ENCODE measurements at regions of chr14 and their contacts with region 1.

Region 1: GRCh38 chr14:67695394-67695949 is at the start of gene RDH11:
- DNase-seq: peak; percentile 91
- H3K4me3 Mint-ChIP-seq: peak within 1 kb of the TSS; percentile 81
- H3K27ac Mint-ChIP-seq: peak within 1 kb of the TSS; percentile 91
- H3K4me1 Mint-ChIP-seq: peaks cover 22% of the 10 kb centered on the region
- H3K27me3 Mint-ChIP-seq: no peaks in the 10 kb centered on the region
- total RNA-seq, gene RDH11: 58.5 to 64.3 TPM

Region 2: DNA sequence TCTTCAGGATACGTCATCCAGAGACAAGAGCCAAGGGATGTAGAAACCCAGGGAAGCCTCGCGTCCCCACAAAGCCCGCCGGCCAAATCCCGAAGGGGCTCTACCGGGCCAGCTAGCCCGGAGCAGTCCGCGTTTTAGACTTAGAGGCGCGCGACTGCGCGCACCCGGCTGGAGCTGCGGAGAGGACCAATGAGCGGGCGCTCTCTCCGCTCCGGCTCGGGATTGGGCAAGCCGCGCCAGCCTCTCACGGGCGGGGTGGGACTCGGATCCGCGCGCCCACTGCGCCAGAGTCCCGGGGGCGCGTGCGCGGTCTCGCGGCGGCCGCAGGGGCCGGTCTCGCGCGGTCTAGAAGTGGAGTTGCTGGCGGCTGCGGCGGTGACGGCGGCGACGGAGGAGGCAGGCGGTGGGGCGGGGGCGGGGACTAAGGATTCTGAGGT is 454.5 kb before region 1 on chr14:
- CTCF ChIA-PET with region 1: no interaction called
- intact Hi-C with region 1: loop called (anchors 5 kb)
- DNase-seq: peak; percentile 94
- H3K4me3 Mint-ChIP-seq: peak overlapping the region; percentile 85
- H3K27ac Mint-ChIP-seq: peak overlapping the region; percentile 86
- H3K4me1 Mint-ChIP-seq: peaks cover 19% of the 10 kb centered on the region
- H3K27me3 Mint-ChIP-seq: peaks cover 2% of the 10 kb centered on the region

Region 3: DNA sequence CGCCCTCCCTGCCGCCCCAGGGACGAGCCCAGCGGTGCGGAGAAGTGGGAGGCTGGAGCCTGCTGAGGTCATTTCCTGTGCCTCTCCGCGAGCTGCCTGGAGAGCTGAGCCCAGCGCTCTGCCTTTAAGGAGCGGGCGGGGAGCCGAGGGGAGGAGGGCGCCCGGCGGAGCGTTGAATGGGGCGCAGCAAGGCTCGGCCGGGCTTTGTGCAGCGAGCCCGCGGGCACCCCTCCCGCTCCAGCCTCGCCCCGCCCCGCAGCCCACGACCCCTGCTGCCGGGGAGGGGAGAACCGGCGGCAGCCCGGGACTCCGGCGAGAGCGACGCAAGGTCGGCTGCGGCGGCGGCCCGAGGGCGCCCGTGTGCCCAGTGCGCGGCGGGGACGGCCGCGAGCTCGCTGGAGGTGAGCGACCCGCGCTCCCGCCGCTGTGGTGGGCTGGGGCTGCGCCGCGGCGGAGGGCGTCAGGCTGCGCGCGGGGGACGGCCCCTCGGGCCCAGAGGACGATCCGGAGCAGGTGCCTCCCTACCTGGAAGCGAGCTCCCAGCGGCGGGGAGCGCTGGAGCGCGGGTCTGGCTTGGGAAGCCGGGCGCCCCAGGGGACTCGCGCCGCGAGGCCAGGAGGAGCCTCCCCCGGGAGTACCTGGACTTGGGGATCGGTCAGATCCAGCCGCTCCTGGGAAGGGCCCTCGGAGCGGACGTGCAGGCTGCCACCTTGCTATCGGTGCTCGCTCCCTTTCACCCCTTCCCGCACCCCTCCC is 162.3 kb before region 1 on chr14 and contains the start of gene PLEKHH1:
- CTCF ChIA-PET with region 1: no interaction called
- intact Hi-C with region 1: no loop called
- DNase-seq: peak; percentile 76
- H3K4me3 Mint-ChIP-seq: peak within 1 kb of the TSS; percentile 65
- H3K27ac Mint-ChIP-seq: no peak within 1 kb of the TSS
- H3K4me1 Mint-ChIP-seq: peaks cover 3% of the 10 kb centered on the region
- H3K27me3 Mint-ChIP-seq: peaks cover 16% of the 10 kb centered on the region
- total RNA-seq, gene PLEKHH1: 2.2 to 2.5 TPM

Region 4: DNA sequence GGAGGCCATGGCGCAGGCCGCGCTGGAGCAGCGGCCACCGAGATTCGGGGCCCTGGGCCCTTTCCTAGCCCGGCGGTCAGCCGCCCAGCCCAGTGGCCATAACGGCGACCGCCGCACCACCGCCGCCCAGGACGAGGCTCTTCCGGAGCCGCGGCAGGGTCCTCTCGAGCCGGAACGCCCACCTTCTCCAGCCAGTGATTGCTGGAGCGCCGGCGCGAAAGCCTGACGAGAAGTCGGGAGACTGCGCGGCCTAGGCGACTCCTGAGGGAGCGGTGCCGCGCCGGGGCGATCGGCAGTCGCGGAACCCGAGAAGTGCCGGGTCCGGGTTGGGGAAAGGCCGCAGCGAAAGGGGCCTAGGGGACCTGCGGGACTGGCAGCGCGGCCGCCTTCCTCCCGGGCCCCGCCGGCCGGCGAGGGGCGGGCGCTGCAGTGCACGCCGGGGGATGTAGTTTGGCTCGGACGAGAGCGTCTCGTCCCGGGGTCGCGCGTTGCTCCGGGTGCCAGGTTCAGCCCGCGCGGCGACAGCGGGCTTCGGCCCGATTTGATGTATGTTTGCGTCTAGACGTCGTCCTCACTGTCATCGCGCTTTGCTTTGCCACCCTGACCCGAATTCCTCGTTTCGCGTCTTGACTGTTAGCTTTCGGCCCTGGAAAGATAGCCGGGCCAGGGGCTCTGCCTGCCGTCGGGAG is 20.8 kb before region 1 on chr14 and contains the start of gene VTI1B:
- CTCF ChIA-PET with region 1: interaction called, 3 read pairs
- intact Hi-C with region 1: loop called (anchors 1 kb)
- DNase-seq: peak; percentile 68
- H3K4me3 Mint-ChIP-seq: peak within 1 kb of the TSS; percentile 80
- H3K27ac Mint-ChIP-seq: peak within 1 kb of the TSS; percentile 66
- H3K4me1 Mint-ChIP-seq: peaks cover 34% of the 10 kb centered on the region
- H3K27me3 Mint-ChIP-seq: no peaks in the 10 kb centered on the region
- total RNA-seq, gene VTI1B: 74.2 to 78.3 TPM

Region 5: DNA sequence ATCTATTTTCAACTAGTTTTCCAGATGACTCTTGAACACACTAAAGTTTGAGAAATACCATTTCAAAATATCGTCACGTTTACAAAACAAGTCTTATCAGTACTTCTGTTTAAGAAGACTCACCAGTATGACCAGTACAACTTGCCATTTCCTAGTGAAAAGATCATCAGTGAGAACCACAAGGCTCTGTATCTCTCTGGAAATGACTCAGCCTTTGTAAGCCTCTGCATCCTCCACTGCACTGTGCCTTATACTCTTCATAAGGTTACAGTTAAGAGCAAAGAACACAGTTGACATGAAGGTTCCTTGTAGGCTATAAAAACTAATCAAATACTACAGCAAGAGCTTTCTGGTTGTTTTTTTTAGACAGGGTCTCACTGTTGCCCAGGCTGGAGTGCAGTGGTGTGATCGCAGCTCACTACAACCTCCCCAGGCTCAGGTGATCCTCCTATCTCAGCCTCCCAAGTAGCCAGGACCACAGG is 15.3 kb before region 1 on chr14:
- CTCF ChIA-PET with region 1: interaction called, 3 read pairs
- intact Hi-C with region 1: loop called (anchors 1 kb)
- DNase-seq: peak; percentile 39
- H3K4me3 Mint-ChIP-seq: no peak overlapping the region
- H3K27ac Mint-ChIP-seq: peak overlapping the region; percentile 13
- H3K4me1 Mint-ChIP-seq: peaks cover 36% of the 10 kb centered on the region
- H3K27me3 Mint-ChIP-seq: no peaks in the 10 kb centered on the region

Measured in activated naive CD4-positive, alpha-beta T cell treated with anti-CD3 and anti-CD28 coated beads for 36 hours (primary cell).